MCF 10A (cell line): ENCODE measurements at regions of chr1 and their contacts with region 1.

Region 1: DNA sequence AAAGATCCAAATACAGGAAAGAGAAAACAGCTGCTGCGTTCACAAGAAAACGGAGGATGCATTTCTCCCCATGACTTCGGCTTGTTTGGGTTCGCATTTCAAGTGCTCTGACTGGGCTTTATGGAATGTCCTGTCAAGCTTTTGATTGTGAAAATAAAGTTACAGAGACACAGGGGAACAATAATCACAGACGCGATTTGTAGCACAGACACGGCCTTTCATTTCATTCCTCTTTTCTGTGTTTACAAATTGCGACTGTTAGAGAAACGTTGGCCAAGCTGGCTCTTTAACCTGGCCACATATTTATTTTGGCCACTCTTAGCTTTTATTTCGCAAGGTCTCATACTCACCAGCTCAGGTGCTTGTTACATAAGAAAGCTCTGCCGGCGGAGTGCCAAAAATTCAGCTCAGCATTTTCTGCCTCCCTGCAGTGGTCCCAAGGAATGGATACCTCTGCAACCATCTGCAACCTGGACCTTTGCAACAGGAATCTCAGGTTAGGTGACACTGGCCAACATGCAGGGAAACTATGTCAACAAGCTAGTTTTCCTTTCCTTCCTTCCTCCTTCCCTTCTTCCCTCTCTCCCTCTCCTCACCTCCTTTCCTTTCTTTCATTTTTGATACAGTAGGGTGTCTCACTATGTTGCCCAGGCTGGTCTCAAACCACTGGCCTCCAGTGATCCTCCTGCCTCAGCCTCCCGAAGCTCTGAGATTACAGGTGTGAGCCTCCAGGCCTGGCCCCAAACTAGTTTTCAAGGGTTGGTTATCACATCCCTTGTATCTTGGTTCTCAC is 58.2 kb upstream of the SLC45A1 start:
- DNase-seq: peak; percentile 93
- H3K4me3 Mint-ChIP-seq: peak overlapping the region; percentile 59
- H3K27ac Mint-ChIP-seq: peak overlapping the region; percentile 98
- H3K4me1 Mint-ChIP-seq: peaks cover 38% of the 10 kb centered on the region
- H3K27me3 Mint-ChIP-seq: no peaks in the 10 kb centered on the region
- CTCF ChIP-seq: no peak

Region 2: DNA sequence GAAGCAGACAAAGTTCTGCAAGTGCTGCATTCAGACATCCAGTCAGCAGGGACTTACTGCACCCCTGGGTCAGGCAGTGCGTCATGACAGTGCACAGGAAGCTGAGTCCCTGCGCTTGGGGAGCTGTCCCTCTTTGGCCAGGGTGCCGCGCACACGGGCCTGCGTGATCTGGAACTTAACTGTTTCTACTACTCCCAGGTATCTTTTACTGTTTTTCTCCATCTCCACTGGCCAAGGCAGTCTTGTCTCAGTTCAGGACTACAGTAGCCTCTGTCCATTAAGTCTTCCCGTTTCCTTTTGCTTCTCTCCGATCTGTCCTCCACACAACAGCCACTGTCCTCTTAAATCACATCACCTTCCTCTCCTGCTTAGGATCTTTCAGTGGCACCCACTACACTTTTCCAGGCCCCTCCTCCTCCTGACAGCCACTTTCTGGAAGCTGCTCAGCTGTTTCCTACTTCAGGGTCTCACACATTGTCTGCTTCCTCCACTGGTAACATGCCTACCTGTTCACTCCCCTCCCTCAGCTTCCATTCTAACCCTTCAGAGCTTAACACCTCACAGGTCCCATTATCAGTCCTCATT is 249.5 kb before region 1 on chr1:
- CTCF ChIA-PET with region 1: interaction called, 4 read pairs
- POLR2A ChIA-PET with region 1: interaction called, 55 read pairs
- intact Hi-C with region 1: no loop called
- DNase-seq: no peak
- H3K4me3 Mint-ChIP-seq: no peak overlapping the region
- H3K27ac Mint-ChIP-seq: peak overlapping the region; percentile 79
- H3K4me1 Mint-ChIP-seq: peaks cover 48% of the 10 kb centered on the region
- H3K27me3 Mint-ChIP-seq: no peaks in the 10 kb centered on the region
- CTCF ChIP-seq: no peak

Region 3: DNA sequence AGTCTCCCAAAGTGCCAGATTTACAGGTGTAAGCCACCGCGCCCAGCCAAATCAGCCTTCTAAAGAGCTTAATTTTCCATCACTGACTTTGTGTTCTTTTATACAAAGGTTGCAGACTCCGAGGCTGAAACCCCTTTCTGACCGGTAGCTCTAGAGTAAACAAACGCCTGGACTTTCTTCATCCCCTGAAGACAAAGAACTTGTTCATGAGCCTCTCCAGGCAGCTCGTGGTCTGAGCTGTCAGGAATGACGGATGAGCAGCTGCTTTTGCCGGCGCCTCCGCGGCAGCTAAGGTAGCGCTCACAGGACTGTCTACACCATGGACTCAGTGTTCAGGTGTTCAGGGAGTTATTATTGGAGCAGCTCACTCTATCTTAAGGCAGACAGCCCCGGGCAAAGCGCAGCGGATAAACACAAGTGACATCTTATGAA is 105.1 kb before region 1 on chr1:
- CTCF ChIA-PET with region 1: no interaction called
- POLR2A ChIA-PET with region 1: interaction called, 14 read pairs
- intact Hi-C with region 1: no loop called
- DNase-seq: peak; percentile 91
- H3K4me3 Mint-ChIP-seq: peak overlapping the region; percentile 13
- H3K27ac Mint-ChIP-seq: peak overlapping the region; percentile 98
- H3K4me1 Mint-ChIP-seq: peaks cover 14% of the 10 kb centered on the region
- H3K27me3 Mint-ChIP-seq: no peaks in the 10 kb centered on the region
- CTCF ChIP-seq: no peak

Region 4: GRCh38 chr1:8189931-8190483 is 69.7 kb before region 1 on chr1:
- CTCF ChIA-PET with region 1: no interaction called
- POLR2A ChIA-PET with region 1: interaction called, 10 read pairs
- intact Hi-C with region 1: no loop called
- DNase-seq: peak; percentile 70
- H3K4me3 Mint-ChIP-seq: no peak overlapping the region
- H3K27ac Mint-ChIP-seq: peak overlapping the region; percentile 91
- H3K4me1 Mint-ChIP-seq: peaks cover 21% of the 10 kb centered on the region
- H3K27me3 Mint-ChIP-seq: no peaks in the 10 kb centered on the region
- CTCF ChIP-seq: no peak

Region 5: DNA sequence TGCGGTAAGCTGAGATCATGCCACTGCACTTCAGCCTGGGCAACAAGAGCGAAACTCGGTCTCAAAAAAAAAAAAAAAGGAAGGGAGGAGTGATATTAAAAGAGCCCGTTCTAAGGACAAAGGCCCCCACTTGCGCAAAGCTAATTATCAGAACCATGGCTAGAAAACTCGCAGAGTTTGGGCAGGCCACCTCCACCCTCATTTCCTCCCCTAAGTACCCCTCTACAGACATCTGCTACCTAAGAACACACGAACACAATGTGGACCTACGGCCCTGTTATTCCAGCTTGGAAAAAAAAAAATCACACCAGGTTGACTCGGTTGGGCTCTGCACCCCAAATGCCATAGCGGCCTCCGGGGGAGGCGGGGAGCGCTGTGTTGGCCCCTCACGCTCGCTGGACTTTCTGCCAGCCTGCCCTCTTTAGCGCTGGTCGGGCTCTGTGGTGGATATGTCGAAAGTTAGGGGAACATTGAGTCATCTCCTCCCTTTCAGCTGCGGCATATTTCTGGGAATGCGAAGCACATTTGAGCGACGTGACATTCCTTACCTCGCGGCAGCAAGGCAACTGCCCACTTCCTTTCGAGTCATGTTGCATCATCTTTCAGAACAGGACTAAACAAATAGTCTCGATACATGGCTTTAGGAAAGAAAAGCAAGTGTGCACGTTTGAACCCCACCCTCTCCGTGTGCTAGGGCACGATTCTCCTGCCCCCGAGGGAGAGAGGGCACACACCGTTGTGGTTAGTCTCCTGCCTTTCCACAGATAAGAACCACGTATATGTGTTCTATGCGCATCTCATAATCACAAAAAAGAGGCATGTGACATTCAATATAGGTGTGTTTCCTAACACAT is 47.9 kb before region 1 on chr1:
- CTCF ChIA-PET with region 1: no interaction called
- POLR2A ChIA-PET with region 1: interaction called, 23 read pairs
- intact Hi-C with region 1: no loop called
- DNase-seq: peak; percentile 99
- H3K4me3 Mint-ChIP-seq: peak overlapping the region; percentile 51
- H3K27ac Mint-ChIP-seq: peak overlapping the region; percentile 85
- H3K4me1 Mint-ChIP-seq: peaks cover 26% of the 10 kb centered on the region
- H3K27me3 Mint-ChIP-seq: no peaks in the 10 kb centered on the region
- CTCF ChIP-seq: no peak